HEK293 (cell line): ENCODE measurements at regions of chr1 and their contacts with region 1.

Region 1: GRCh38 chr1:39196244-39197215 is 8.0 kb upstream of the MACF1 start:
- H3K4me3 ChIP-seq: no peak overlapping the region
- H3K27ac ChIP-seq: no peak overlapping the region
- H3K4me1 ChIP-seq: peaks cover 10% of the 10 kb centered on the region
- CTCF ChIP-seq: no peak

Region 2: GRCh38 chr1:38898653-38899230 is 297.8 kb before region 1 on chr1:
- CTCF ChIA-PET with region 1: no interaction called
- POLR2A ChIA-PET with region 1: no interaction called
- H3K4me3 ChIP-seq: no peak overlapping the region
- H3K27ac ChIP-seq: no peak overlapping the region
- H3K4me1 ChIP-seq: no peaks in the 10 kb centered on the region
- CTCF ChIP-seq: no peak

Region 3: GRCh38 chr1:39105061-39105840 is 91.3 kb before region 1 on chr1:
- CTCF ChIA-PET with region 1: interaction called, 62 read pairs
- POLR2A ChIA-PET with region 1: interaction called, 14 read pairs
- H3K4me3 ChIP-seq: peak overlapping the region; percentile 72
- H3K27ac ChIP-seq: peak overlapping the region; percentile 95
- H3K4me1 ChIP-seq: peaks cover 18% of the 10 kb centered on the region
- CTCF ChIP-seq: no peak

Region 4: GRCh38 chr1:39127513-39127912 is 69.0 kb before region 1 on chr1:
- CTCF ChIA-PET with region 1: interaction called, 56 read pairs
- POLR2A ChIA-PET with region 1: interaction called, 7 read pairs
- H3K4me3 ChIP-seq: no peak overlapping the region
- H3K27ac ChIP-seq: peak overlapping the region; percentile 6; the same call in 1 of the 2 replicates
- H3K4me1 ChIP-seq: peaks cover 22% of the 10 kb centered on the region
- CTCF ChIP-seq: no peak

Region 5: DNA sequence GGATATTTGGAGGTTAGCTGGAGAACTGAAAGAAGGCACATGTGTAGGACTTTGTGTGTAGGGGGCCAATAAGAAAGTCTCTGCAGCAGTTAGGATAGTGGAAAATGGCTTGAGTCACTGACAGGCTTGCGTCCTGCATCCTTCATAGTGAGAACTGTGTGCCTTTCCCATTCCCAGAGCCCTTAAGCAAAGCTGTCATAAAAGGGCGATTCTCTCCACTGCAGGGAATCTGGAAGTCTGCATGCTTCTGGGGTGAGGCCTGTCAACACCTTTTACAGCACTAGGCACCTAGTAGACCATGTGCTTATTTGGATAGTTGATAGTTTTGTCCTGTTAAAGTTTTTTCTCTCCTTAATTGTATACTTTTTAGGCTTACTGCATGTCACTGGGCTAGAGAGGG is 31.5 kb before region 1 on chr1:
- CTCF ChIA-PET with region 1: interaction called, 12 read pairs
- POLR2A ChIA-PET with region 1: no interaction called
- H3K4me3 ChIP-seq: no peak overlapping the region
- H3K27ac ChIP-seq: no peak overlapping the region
- H3K4me1 ChIP-seq: peaks cover 18% of the 10 kb centered on the region
- CTCF ChIP-seq: no peak

Region 6: DNA sequence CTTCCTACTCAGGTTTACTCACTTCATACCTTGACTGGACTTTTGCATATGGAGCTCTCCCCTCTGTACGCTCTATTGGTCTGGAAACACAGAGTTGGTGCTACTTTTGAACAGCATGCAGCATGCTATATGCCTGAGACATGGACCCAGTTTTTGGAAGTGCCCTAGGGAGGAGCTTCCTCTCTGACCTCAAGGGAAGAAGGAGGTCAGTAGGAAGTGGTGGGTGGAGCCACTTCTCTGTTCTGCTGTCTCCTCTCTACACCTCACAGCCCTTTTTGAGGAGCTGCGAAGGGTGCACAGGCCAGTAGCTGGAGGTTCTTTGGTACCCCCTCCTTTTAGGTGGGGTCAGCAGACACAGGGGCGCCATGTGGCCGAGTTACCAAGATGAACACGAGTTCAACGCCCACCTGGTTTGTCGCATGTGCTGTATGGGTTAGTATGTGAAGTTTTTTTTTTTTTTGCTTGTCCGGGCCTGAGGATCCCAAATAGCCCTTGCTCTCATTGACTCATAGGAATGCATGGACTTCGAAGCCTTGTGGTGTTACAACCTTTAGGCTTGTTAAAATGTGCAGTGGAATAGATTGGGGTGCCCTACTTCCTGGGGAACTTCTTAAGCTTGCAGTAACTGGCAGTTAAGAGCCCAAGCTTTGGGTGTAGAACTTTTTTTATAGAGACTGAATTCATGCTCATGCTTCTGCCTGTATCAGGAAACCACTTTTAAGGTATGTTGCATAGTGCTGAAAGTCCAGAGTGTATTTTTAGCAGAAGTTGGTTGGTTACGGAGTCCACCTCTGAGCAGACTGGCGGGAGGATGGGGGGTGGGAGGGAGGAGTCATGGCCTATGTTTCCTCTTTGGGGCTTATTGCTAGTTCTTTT is 18.7 kb after region 1 on chr1:
- CTCF ChIA-PET with region 1: interaction called, 42 read pairs
- POLR2A ChIA-PET with region 1: interaction called, 3 read pairs
- H3K4me3 ChIP-seq: no peak overlapping the region
- H3K27ac ChIP-seq: no peak overlapping the region
- H3K4me1 ChIP-seq: peaks cover 5% of the 10 kb centered on the region; the same call in 1 of the 2 replicates
- CTCF ChIP-seq: no peak

Region 7: DNA sequence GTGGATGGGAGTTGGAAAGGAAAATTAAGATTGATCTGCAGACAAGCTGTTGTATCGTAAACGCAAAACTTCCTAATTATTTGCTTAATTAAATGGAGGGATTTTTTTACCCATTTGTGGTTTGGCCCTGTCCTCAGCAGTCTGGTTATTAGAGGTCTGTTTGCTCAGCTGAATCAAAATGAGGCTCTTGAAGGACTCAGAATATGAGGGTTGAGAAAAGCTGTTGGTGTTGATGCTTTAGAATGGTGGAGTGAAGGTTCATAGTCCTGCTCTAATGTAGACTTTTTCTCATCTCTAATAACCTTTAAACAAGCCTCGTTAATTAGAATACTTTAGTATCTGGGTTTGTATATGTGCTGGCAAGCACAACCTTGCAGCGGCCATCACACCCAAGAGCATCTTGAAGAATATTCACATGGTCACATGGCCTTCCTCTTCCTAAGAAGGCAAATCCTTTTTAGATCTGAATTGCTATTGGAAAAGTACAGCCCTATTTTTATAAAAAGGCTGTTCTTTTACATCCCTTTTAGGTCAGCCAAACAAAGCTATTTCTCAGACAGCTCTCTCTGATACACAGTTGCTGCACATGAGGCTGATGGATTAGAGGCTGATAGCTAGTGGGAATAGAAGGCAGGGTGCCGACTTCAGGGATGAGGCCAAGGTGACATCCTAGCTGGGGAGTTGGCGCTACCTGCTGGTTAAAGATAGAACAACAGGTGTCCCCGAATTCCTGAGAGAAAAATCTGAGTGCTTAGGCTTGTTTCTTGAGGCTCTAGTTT is 61.8 kb after region 1 on chr1:
- CTCF ChIA-PET with region 1: interaction called, 184 read pairs
- POLR2A ChIA-PET with region 1: interaction called, 10 read pairs
- H3K4me3 ChIP-seq: no peak overlapping the region
- H3K27ac ChIP-seq: no peak overlapping the region
- H3K4me1 ChIP-seq: peaks cover 11% of the 10 kb centered on the region; the same call in 1 of the 2 replicates
- CTCF ChIP-seq: peak; percentile 84